Activated B cell treated with CpG ODN at 0.5 μM for 24 hours (primary cell): ENCODE measurements at regions of chr3 and their contacts with region 1.

Region 1: GRCh38 chr3:128051837-128052594 is at the start of gene SEC61A1:
- DNase-seq: peak; percentile 97
- ATAC-seq: peak; percentile 95
- H3K4me3 Mint-ChIP-seq: peak within 1 kb of the TSS; percentile 96
- H3K27ac Mint-ChIP-seq: peak within 1 kb of the TSS; percentile 95
- H3K4me1 Mint-ChIP-seq: peaks cover 41% of the 10 kb centered on the region
- H3K27me3 Mint-ChIP-seq: no peaks in the 10 kb centered on the region
- CTCF ChIP-seq: no peak
- total RNA-seq, gene SEC61A1: 83.2 and 84.0 TPM in 2 replicates

Region 2: GRCh38 chr3:126982471-126983175 is 1069.4 kb before region 1 on chr3 and contains the start of gene PLXNA1:
- CTCF ChIA-PET with region 1: no interaction called
- POLR2A ChIA-PET with region 1: no interaction called
- intact Hi-C with region 1: loop called (anchors 1 kb)
- DNase-seq: peak; percentile 92
- ATAC-seq: peak; percentile 75
- H3K4me3 Mint-ChIP-seq: peak within 1 kb of the TSS; percentile 87
- H3K27ac Mint-ChIP-seq: peak within 1 kb of the TSS; percentile 97
- H3K4me1 Mint-ChIP-seq: peaks cover 29% of the 10 kb centered on the region
- H3K27me3 Mint-ChIP-seq: peaks cover 4% of the 10 kb centered on the region
- CTCF ChIP-seq: peak; percentile 43
- total RNA-seq, gene PLXNA1: 47.2 and 55.2 TPM in 2 replicates

Region 3: GRCh38 chr3:127612966-127613365 is 439.1 kb before region 1 on chr3:
- CTCF ChIA-PET with region 1: no interaction called
- POLR2A ChIA-PET with region 1: interaction called, 13 read pairs
- intact Hi-C with region 1: no loop called
- DNase-seq: no peak
- ATAC-seq: no peak
- H3K4me3 Mint-ChIP-seq: no peak overlapping the region
- H3K27ac Mint-ChIP-seq: no peak overlapping the region
- H3K4me1 Mint-ChIP-seq: peaks cover 22% of the 10 kb centered on the region
- H3K27me3 Mint-ChIP-seq: no peaks in the 10 kb centered on the region
- CTCF ChIP-seq: no peak

Region 4: DNA sequence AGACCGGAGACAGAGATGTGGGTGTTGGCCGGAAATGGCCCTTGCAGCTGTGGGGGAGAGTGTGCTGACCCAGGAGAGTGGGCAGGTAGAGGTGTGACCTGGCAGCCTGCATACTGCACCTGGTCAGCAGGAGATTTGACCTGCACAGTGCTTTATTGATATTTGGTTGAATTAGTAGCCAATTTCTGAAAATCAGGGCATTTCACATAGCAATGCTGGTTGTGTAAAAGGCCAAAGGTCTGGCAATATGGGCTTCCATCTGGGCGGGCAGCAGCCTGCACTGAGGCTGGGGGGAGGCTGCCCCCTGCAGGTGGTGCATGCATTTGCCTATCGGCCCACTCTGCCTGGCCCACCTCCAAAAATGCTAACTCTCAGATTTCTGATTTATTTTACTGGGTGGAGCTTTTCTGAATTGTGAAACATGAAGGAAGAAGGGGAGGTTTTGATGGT is 220.3 kb before region 1 on chr3:
- CTCF ChIA-PET with region 1: no interaction called
- POLR2A ChIA-PET with region 1: no interaction called
- intact Hi-C with region 1: loop called (anchors 5 kb)
- DNase-seq: peak; percentile 32
- ATAC-seq: no peak
- H3K4me3 Mint-ChIP-seq: no peak overlapping the region
- H3K27ac Mint-ChIP-seq: no peak overlapping the region
- H3K4me1 Mint-ChIP-seq: peaks cover 40% of the 10 kb centered on the region
- H3K27me3 Mint-ChIP-seq: no peaks in the 10 kb centered on the region
- CTCF ChIP-seq: no peak

Region 5: GRCh38 chr3:128153156-128154041 is 101.4 kb after region 1 on chr3 and contains the start of gene EEFSEC:
- CTCF ChIA-PET with region 1: no interaction called
- POLR2A ChIA-PET with region 1: interaction called, 5 read pairs
- intact Hi-C with region 1: loop called (anchors 1 kb)
- DNase-seq: peak; percentile 89
- ATAC-seq: peak; percentile 95
- H3K4me3 Mint-ChIP-seq: peak within 1 kb of the TSS; percentile 96
- H3K27ac Mint-ChIP-seq: peak within 1 kb of the TSS; percentile 95
- H3K4me1 Mint-ChIP-seq: peaks cover 17% of the 10 kb centered on the region
- H3K27me3 Mint-ChIP-seq: no peaks in the 10 kb centered on the region
- CTCF ChIP-seq: no peak
- total RNA-seq, gene EEFSEC: 20.0 and 21.3 TPM in 2 replicates

Region 6: DNA sequence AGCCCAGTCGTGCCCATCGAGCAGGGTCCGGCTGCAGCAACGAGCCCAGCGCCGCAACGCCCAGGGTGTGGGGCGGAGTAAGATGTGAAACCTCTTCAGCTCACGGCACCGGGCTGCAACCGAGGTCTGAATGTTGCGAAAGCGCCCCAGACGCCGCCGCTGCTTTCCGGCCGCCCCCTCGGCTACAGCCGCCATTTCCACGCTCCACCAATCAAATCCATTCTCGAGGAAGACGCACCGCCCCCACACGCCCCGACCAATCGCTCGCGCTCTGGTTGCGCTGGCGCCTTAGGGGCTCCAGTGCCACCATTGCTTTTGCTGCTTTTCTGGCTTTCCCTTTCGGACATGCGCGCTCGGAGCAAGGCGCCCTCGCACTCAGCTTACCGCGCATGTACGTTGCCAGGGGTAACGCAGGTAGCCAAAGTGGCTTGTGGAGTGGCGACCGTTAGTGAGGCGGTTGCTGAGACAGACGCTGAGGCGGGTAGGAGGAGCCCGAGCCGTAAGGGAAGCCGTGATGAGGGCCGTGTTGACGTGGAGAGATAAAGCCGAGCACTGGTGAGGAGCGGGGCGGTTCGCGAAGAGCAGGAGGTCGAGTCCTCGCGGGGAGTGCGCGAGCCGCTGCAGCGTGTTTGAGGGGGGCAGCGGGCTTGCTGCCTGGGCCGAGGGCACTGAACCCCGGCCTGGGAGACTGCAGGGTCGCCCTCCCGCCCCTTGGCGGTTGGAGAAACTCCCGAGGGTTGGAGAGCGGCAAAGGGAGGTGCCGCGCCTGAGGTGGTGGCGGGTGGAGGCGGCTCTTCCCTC is 1388.0 kb after region 1 on chr3 and contains the starts of genes IFT122 and MBD4:
- CTCF ChIA-PET with region 1: no interaction called
- POLR2A ChIA-PET with region 1: no interaction called
- intact Hi-C with region 1: loop called (anchors 5 kb)
- DNase-seq: peak; percentile 92
- ATAC-seq: peak; percentile 83
- H3K4me3 Mint-ChIP-seq: peak within 1 kb of the TSS; percentile 96
- H3K27ac Mint-ChIP-seq: peak within 1 kb of the TSS; percentile 96
- H3K4me1 Mint-ChIP-seq: peaks cover 60% of the 10 kb centered on the region
- H3K27me3 Mint-ChIP-seq: no peaks in the 10 kb centered on the region
- CTCF ChIP-seq: no peak
- total RNA-seq, gene IFT122: 18.7 and 19.2 TPM in 2 replicates
- total RNA-seq, gene MBD4: 86.3 and 98.7 TPM in 2 replicates